ENCODE measurements at regions of chr11 and their contacts with region 1.

Region 1: DNA sequence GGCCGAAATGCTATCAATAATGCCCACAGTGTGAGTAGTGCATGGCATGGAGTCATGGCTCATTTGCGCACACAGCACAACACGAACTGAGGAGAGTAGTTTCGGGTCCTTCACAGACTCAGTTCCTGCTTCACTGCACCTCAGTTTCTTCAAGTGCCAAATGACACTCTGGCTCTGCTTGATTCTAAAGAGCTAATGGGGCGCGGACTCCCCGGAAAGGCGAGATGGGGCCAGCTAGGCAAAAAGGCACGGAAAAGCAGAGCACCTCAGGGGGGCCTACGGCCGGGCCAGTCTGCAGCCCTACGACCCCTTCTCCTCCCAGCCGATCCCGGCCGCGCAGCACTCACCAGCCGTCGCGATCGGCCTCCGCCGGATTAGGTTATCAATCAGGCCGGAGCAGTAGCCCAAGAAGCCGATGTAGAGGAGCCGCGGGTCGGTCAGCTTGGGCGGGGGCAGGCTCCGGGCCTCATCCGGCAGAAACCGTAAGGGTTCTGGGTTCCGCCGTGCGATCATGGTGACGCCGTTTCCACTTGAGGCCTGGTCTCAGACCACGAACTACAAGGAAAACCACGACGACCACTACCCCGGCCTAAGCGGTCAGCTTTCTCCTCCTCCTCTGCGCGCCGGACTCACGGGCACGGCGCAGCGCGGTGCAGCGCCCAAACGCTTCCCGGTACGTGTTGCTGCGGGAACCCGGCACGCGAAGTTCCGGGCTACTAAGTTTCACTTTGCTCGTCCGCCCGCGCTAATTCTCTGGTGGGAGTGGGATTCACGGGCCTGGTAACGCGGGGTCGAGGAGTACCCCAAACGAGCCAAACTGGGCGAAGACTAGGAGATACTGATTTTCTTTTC is at the start of gene NDUFC2:
- DNase-seq: peak; percentile 75
- ATAC-seq: peak; percentile 82
- H3K4me3 Mint-ChIP-seq: peak within 1 kb of the TSS; percentile 92
- H3K27ac Mint-ChIP-seq: peak within 1 kb of the TSS; percentile 90
- H3K4me1 Mint-ChIP-seq: peaks cover 58% of the 10 kb centered on the region
- H3K27me3 Mint-ChIP-seq: no peaks in the 10 kb centered on the region
- total RNA-seq, gene NDUFC2: 193 TPM

Region 2: GRCh38 chr11:78045851-78046485 is 33.5 kb before region 1 on chr11:
- CTCF ChIA-PET with region 1: interaction called, 14 read pairs
- POLR2A ChIA-PET with region 1: no interaction called
- DNase-seq: peak; percentile 77
- ATAC-seq: peak; percentile 99
- H3K4me3 Mint-ChIP-seq: peak overlapping the region; percentile 49
- H3K27ac Mint-ChIP-seq: peak overlapping the region; percentile 39
- H3K4me1 Mint-ChIP-seq: peaks cover 17% of the 10 kb centered on the region
- H3K27me3 Mint-ChIP-seq: no peaks in the 10 kb centered on the region

Region 3: DNA sequence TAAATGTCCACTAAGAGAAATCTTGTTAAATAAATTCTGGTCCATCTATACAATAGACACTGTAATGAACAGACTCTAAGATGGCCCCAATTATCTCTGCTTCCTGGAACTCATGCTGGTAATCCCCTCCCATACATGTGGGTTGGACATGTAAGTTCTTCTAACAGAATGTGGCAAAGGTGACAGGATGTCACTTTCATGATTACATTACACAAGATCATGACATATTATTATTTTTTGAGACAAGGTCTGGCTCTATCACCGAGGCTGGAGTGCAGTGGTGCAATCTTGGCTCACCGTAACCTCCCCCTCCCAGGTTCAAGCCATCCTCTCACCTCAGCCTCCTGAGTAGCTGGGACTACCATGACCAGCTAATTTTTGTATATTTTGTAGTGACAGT is 14.8 kb after region 1 on chr11:
- CTCF ChIA-PET with region 1: interaction called, 10 read pairs
- POLR2A ChIA-PET with region 1: interaction called, 6 read pairs
- DNase-seq: peak; percentile 42
- ATAC-seq: peak; percentile 84
- H3K4me3 Mint-ChIP-seq: no peak overlapping the region
- H3K27ac Mint-ChIP-seq: peak overlapping the region; percentile 78
- H3K4me1 Mint-ChIP-seq: peaks cover 12% of the 10 kb centered on the region
- H3K27me3 Mint-ChIP-seq: no peaks in the 10 kb centered on the region

Region 4: DNA sequence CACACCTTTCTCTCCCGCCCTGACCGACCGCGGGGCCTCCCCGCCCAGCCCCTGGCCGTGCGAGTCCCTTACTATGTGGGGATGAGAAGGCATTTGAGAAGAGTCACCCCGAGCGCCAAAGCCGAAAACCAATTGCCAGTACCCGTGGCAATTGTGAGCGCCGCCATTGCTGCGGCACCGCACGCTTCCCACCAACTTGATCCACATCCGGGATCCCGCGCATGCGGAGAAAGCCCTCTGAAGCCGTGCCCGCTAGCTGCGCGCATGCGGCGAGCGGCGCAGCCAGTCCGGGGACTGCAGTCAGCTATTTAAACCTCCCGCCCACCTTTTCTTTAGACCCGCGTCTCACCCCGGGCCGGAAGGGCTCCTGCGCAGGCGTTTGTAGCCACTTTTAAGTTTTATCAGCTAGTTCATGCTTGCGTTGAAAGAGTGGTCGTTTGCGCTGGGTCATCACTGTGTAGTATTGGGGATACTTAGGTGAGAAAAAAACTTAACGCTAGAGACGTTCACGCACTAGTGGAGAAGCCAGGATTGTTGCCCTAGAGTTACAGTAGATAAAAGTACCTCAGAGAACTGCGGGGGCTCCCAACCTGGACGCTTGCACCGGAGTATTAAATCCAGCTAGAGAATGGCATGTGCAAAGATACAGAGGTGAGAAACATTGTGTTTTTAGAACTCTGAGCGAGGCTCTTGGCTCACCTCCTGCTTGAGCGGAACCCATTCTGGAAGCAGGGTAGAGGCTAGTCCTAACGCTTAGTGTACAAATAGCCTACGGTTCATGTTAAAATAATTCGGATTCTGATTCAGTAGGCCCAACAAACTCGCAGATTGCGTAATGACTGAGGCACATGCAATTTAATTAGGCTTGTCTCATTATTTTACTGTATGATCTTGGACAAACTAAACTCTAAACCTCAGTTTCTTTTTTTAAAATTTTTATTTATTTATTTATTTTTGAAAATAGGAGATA is 60.2 kb after region 1 on chr11 and contains the start of gene ALG8:
- CTCF ChIA-PET with region 1: interaction called, 9 read pairs
- POLR2A ChIA-PET with region 1: interaction called, 18 read pairs
- DNase-seq: peak; percentile 97
- ATAC-seq: peak; percentile 97
- H3K4me3 Mint-ChIP-seq: peak within 1 kb of the TSS; percentile 80
- H3K27ac Mint-ChIP-seq: peak within 1 kb of the TSS; percentile 93
- H3K4me1 Mint-ChIP-seq: peaks cover 44% of the 10 kb centered on the region
- H3K27me3 Mint-ChIP-seq: no peaks in the 10 kb centered on the region
- total RNA-seq, gene ALG8: 49.9 to 51.7 TPM

Measured in activated CD8-positive, alpha-beta T cell treated with anti-CD3 and anti-CD28 coated beads, Interleukin-2, amount 10 ng/mL, durations not matched to agents 7 days and 5 days (primary cell).